Activated T-helper 1 cell treated with anti-CD3 and anti-CD28 coated beads, Interleukin-12 subunit alpha, Interleukin-12 subunit beta, Interleukin-2, Interleukin-4 antibody, amounts not matched to agents 30 ng/mL and 10 ng/mL and 1 ng/mL, durations not matched to agents 14 hours and 24 hours and 36 hours (primary cell): ENCODE measurements at regions of chr14 and their contacts with region 1.

Region 1: GRCh38 chr14:51780006-51780692 is 80.3 kb upstream of the GNG2 start:
- DNase-seq: peak; percentile 56
- H3K4me3 Mint-ChIP-seq: no peak overlapping the region
- H3K27ac Mint-ChIP-seq: no peak overlapping the region
- H3K4me1 Mint-ChIP-seq: peaks cover 9% of the 10 kb centered on the region
- H3K27me3 Mint-ChIP-seq: peaks cover 25% of the 10 kb centered on the region

Region 2: DNA sequence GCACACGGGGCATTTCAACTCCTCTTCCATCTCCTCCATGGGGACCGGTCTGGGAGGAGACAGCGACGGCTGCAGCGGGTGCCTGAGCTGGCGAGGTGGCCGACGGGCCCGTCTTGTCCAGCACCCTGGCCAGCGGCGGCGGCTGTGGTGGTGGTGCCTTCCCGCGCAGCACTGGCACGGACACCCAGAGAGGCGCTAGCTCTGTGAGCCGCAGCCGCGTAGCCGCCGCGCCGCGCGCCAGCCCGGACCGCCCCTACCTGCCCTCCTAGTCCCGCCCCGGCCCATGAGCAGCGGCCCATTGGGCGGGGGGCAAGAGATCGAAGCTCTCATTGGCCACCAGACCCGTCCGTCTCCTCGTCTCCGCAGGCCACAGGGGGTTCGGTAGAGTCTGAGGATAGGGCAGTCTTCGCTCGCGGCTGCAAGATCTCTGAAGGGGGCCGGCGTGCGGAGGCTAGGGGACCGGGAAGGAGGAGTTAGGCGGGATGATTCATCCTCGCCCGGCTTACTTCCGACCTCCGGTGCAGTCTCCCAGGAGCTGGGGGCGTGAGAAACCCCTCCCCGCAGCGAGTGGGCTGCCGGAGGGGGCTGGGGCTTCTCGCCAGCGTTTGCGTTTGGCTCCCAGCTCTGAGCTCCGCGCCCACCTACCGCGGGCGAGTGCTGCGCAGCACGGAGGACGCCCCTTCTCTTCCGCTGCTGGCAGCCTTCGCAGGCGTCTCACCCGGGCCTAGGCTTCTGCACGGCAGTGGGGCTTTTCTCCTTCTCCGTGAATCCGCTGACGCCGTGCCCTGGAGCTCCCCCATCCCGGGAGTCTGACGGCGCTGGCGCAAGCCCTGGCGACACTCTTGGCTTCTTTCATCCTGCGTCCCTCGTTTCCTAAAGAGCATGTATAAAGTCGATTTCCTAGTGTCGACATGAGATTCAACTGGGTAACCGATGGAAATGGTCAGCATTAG is 685.0 kb before region 1 on chr14 and contains the start of gene TRIM9:
- intact Hi-C with region 1: loop called (anchors 5 kb)
- DNase-seq: peak; percentile 84
- H3K4me3 Mint-ChIP-seq: peak within 1 kb of the TSS; percentile 88
- H3K27ac Mint-ChIP-seq: peak within 1 kb of the TSS; percentile 65
- H3K4me1 Mint-ChIP-seq: peaks cover 11% of the 10 kb centered on the region
- H3K27me3 Mint-ChIP-seq: peaks cover 51% of the 10 kb centered on the region
- total RNA-seq, gene TRIM9: 0.31 TPM in 1 of 2 replicates, not detected in the other

Region 3: DNA sequence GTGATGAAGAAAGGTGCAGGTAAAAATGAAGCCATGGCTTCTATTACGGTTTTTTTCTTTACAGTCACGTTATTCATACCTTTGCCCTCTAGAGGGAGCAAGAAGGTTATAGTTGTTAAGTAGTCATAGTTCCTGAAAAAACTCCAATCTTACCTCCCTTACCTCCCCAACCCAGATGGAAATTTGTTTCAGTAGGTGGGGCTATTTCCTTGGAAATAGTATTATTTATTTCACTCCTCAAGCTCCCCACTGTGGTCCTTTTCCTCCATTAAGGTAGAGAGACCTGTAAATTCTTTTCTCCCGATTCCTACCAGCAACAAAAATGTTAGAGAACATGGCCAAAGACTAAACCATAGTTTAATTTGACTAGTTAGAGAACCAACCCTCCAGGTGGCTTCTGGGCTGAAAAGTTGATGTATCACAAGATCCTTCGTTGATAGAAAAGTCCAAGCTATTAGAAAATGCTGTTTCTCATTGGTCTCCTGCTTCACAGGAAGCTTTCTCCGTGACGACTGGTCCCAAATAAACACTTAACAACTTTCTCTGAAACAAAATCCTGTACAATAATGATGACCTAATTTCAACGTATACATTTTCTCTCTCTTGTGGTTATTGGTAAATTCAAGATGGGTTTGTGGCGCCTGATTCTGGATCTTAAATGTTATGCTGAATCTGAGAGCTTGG is 496.6 kb before region 1 on chr14:
- intact Hi-C with region 1: loop called (anchors 1 kb)
- DNase-seq: no peak
- H3K4me3 Mint-ChIP-seq: no peak overlapping the region
- H3K27ac Mint-ChIP-seq: no peak overlapping the region
- H3K4me1 Mint-ChIP-seq: no peaks in the 10 kb centered on the region
- H3K27me3 Mint-ChIP-seq: no peaks in the 10 kb centered on the region

Region 4: DNA sequence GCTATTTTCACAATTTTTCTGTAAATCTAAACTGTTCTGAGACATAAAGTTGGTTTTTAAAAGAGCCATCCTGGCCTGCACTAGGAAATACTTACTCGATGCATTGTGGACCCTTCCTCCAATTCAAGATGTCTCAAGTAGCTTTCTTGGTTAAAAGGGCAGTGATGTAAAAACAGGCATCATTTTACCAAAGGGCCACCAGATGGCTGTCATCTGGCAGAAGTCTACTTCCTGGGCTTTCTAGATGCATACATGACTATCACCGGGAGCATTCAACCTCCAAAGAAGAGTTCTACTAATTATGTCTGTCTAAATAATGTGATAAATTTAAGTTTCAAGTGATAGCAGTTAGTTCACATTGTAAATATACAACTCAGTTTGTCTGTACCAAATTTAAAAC is 225.2 kb before region 1 on chr14:
- intact Hi-C with region 1: loop called (anchors 5 kb)
- DNase-seq: no peak
- H3K4me3 Mint-ChIP-seq: no peak overlapping the region
- H3K27ac Mint-ChIP-seq: no peak overlapping the region
- H3K4me1 Mint-ChIP-seq: no peaks in the 10 kb centered on the region
- H3K27me3 Mint-ChIP-seq: peaks cover 5% of the 10 kb centered on the region

Region 5: DNA sequence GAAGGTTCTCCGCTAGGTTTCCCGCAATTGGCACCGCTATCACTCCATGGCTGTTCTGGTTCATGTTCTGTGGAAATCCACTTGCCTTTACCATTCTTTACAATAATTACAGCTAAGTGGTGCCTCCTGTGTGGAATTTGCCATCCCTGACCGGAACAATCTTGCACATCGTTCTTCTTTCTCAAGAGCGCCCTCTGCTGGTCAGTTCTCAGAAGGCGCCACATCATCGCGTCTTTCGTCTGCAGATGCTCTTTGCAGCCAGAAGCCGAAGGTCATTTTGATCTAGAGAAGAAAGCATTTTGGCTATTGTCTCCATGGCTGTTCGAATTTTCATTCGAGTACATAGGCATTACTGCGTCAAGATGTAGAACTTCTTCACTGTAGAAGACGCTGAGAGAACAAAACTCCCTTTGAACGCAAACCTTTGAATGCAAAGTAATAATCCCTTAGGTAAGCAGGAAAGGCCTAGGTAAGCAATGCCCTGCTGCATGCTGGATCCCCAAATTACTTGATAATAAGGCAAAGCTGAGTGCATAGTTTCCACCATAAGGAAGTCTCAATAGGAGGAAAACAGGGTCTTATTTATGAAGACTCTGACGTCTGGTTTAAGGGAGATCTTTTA is 199.1 kb after region 1 on chr14:
- intact Hi-C with region 1: loop called (anchors 1 kb)
- DNase-seq: peak; percentile 70
- H3K4me3 Mint-ChIP-seq: no peak overlapping the region
- H3K27ac Mint-ChIP-seq: no peak overlapping the region
- H3K4me1 Mint-ChIP-seq: peaks cover 22% of the 10 kb centered on the region
- H3K27me3 Mint-ChIP-seq: peaks cover 2% of the 10 kb centered on the region